Naive thymus-derived CD4-positive, alpha-beta T cell (primary cell): ENCODE measurements at regions of chr20 and their contacts with region 1.

Region 1: DNA sequence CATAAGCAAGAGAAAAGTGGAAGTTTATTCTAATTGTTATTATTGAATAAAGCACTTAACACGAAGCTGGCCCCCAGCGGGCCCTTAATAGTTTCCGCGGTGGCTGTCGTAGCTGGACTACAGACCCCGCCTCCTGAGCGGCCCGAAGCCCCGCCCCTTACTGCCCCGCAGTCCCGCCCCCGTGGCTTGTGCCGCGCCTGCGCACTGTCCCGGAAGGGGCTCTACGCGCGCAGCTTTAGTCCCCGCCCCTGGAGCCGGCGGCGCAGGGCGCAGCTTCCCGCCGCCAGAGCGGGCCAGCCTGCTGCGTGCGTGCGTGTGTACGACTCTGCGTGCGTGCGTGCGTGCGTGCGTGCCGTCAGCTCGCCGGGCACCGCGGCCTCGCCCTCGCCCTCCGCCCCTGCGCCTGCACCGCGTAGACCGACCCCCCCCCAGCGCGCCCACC is at the start of gene VAPB:
- DNase-seq: peak; percentile 94 to 99 (median 98)
- ATAC-seq: peak; percentile 98
- H3K4me3 ChIP-seq: peak within 1 kb of the TSS; percentile 77
- H3K4me3 Mint-ChIP-seq: peak within 1 kb of the TSS; percentile 82 to 100 (median 96)
- H3K27ac ChIP-seq: peak within 1 kb of the TSS; percentile 100
- H3K27ac Mint-ChIP-seq: peak within 1 kb of the TSS; percentile 84 to 99 (median 97)
- H3K4me1 ChIP-seq: peaks cover 13 to 28% of the 10 kb centered on the region in 2 donors
- H3K4me1 Mint-ChIP-seq: peaks cover 29 to 44% (median 42%) of the 10 kb centered on the region in 7 donors
- H3K27me3 ChIP-seq: no peaks in the 10 kb centered on the region
- H3K27me3 Mint-ChIP-seq: peaks cover 0 to 11% (median 0%) of the 10 kb centered on the region in 5 donors
- total RNA-seq, gene VAPB: 23.0 to 37.0 (median 27.6) TPM

Region 2: GRCh38 chr20:57628047-57628961 is 760.6 kb before region 1 on chr20:
- CTCF ChIA-PET with region 1: no interaction called
- POLR2A ChIA-PET with region 1: no interaction called
- intact Hi-C with region 1: loop called in 1 of 2 experiments (anchors 5 kb)
- DNase-seq: peak in 7 of 9 donors; percentile 62 to 81 (median 71)
- ATAC-seq: peak; percentile 88
- H3K4me3 ChIP-seq: peak overlapping the region; percentile 49
- H3K4me3 Mint-ChIP-seq: peak overlapping the region; percentile 85 to 97 (median 91)
- H3K27ac ChIP-seq: peak overlapping the region; percentile 83
- H3K27ac Mint-ChIP-seq: peak overlapping the region; percentile 92 to 100 (median 98)
- H3K4me1 ChIP-seq: peaks cover 41 to 51% of the 10 kb centered on the region in 2 donors
- H3K4me1 Mint-ChIP-seq: peaks cover 38 to 94% (median 80%) of the 10 kb centered on the region in 7 donors
- H3K27me3 ChIP-seq: no peaks in the 10 kb centered on the region
- H3K27me3 Mint-ChIP-seq: peaks cover 0 to 53% (median 0%) of the 10 kb centered on the region in 5 donors

Region 3: GRCh38 chr20:58407966-58408557 is 19.2 kb after region 1 on chr20:
- CTCF ChIA-PET with region 1: interaction called, 5 read pairs
- POLR2A ChIA-PET with region 1: interaction called, 14 read pairs
- intact Hi-C with region 1: loop called (anchors 1 kb)
- DNase-seq: peak in 7 of 9 donors; percentile 19 to 47 (median 37)
- ATAC-seq: peak; percentile 77
- H3K4me3 ChIP-seq: peak overlapping the region; percentile 25
- H3K4me3 Mint-ChIP-seq: peak overlapping the region; percentile 62 to 84 (median 73)
- H3K27ac ChIP-seq: peak overlapping the region; percentile 60
- H3K27ac Mint-ChIP-seq: peak overlapping the region in 8 of 9 donors; percentile 79 to 93 (median 89)
- H3K4me1 ChIP-seq: peaks cover 21 to 35% of the 10 kb centered on the region in 2 donors
- H3K4me1 Mint-ChIP-seq: peaks cover 13 to 44% (median 39%) of the 10 kb centered on the region in 7 donors
- H3K27me3 ChIP-seq: no peaks in the 10 kb centered on the region
- H3K27me3 Mint-ChIP-seq: no peaks in the 10 kb centered on the region

Region 4: GRCh38 chr20:58850693-58851174 is 461.8 kb after region 1 on chr20 and contains the start of gene GNAS-AS1:
- CTCF ChIA-PET with region 1: no interaction called
- POLR2A ChIA-PET with region 1: no interaction called
- intact Hi-C with region 1: loop called in 1 of 2 experiments (anchors 1 kb)
- DNase-seq: peak; percentile 57 to 81 (median 78)
- ATAC-seq: peak; percentile 87
- H3K4me3 ChIP-seq: peak within 1 kb of the TSS; percentile 61
- H3K4me3 Mint-ChIP-seq: peak within 1 kb of the TSS; percentile 83 to 95 (median 92)
- H3K27ac ChIP-seq: no peak within 1 kb of the TSS
- H3K27ac Mint-ChIP-seq: peak within 1 kb of the TSS in 4 of 9 donors; percentile 19 to 81 (median 54)
- H3K4me1 ChIP-seq: no peaks in the 10 kb centered on the region
- H3K4me1 Mint-ChIP-seq: peaks cover 11 to 36% (median 30%) of the 10 kb centered on the region in 7 donors
- H3K27me3 ChIP-seq: peaks cover 0 to 10% of the 10 kb centered on the region in 2 donors
- H3K27me3 Mint-ChIP-seq: peaks cover 21 to 67% (median 27%) of the 10 kb centered on the region in 5 donors
- total RNA-seq, gene GNAS-AS1: 0.13 to 2.0 (median 1.5) TPM

Region 5: GRCh38 chr20:58980700-58981627 is 592.1 kb after region 1 on chr20 and contains the start of gene NELFCD:
- CTCF ChIA-PET with region 1: no interaction called
- POLR2A ChIA-PET with region 1: no interaction called
- intact Hi-C with region 1: loop called (anchors 1 kb)
- DNase-seq: peak; percentile 78 to 96 (median 88)
- ATAC-seq: peak; percentile 97
- H3K4me3 ChIP-seq: peak within 1 kb of the TSS; percentile 91
- H3K4me3 Mint-ChIP-seq: peak within 1 kb of the TSS; percentile 86 to 97 (median 94)
- H3K27ac ChIP-seq: peak within 1 kb of the TSS; percentile 88
- H3K27ac Mint-ChIP-seq: peak within 1 kb of the TSS; percentile 77 to 98 (median 90)
- H3K4me1 ChIP-seq: peaks cover 24% of the 10 kb centered on the region in 2 donors
- H3K4me1 Mint-ChIP-seq: peaks cover 26 to 41% (median 32%) of the 10 kb centered on the region in 7 donors
- H3K27me3 ChIP-seq: no peaks in the 10 kb centered on the region
- H3K27me3 Mint-ChIP-seq: peaks cover 0 to 9% (median 0%) of the 10 kb centered on the region in 5 donors
- total RNA-seq, gene NELFCD: 84.5 to 96.1 (median 90.8) TPM

Region 6: GRCh38 chr20:59403261-59403961 is 1014.5 kb after region 1 on chr20:
- CTCF ChIA-PET with region 1: no interaction called
- POLR2A ChIA-PET with region 1: no interaction called
- intact Hi-C with region 1: loop called in 1 of 2 experiments (anchors 5 kb)
- DNase-seq: peak; percentile 65 to 91 (median 77)
- ATAC-seq: peak; percentile 93
- H3K4me3 ChIP-seq: peak overlapping the region; percentile 53
- H3K4me3 Mint-ChIP-seq: peak overlapping the region in 1 of 10 donors; percentile 59
- H3K27ac ChIP-seq: peak overlapping the region; percentile 41
- H3K27ac Mint-ChIP-seq: peak overlapping the region in 4 of 9 donors; percentile 49 to 94 (median 85)
- H3K4me1 ChIP-seq: peaks cover 12 to 35% of the 10 kb centered on the region in 2 donors
- H3K4me1 Mint-ChIP-seq: peaks cover 0 to 4% (median 2%) of the 10 kb centered on the region in 7 donors
- H3K27me3 ChIP-seq: peaks cover 0 to 7% of the 10 kb centered on the region in 2 donors
- H3K27me3 Mint-ChIP-seq: peaks cover 0 to 18% (median 3%) of the 10 kb centered on the region in 5 donors

Region 7: DNA sequence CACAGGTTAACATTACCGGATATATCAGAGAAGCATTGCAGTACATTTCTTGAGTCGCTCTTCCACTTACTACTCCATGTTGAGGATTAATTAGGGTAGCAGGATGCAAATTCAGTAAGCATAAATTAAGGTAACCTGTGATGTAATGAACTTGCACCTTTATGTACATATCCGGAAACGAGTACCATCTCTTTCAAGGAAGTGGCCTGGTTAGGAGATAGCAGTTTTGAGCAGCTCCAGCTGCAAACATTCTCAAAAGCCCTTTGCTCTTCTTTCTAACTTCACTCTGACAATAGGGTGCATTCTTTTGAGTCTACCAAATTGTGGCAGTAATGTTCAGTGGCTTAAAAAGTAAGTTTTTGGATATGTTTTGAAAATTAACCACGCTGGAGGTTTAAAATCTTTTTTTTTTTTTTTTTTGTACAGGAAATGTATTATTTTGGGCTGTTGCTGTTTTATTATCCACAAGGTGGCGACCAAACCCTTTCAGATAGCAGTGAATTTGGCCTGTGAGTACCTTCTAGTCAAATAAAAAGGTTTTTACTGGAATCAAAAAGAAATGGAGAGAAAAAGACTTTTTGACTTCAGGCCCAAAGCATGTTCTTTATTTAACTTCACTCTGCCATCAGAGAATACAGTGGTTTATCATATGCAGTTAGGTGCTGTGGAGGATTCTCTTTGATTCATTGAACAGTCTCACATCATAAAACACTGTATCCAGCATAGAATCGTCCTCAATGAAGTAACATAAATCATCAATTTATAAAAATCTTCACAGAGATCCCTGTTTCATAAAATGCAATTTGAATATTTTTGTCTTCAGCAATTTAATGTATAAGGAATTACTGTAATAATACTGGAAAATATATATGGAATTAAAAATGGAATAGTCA is 1560.2 kb after region 1 on chr20:
- CTCF ChIA-PET with region 1: no interaction called
- POLR2A ChIA-PET with region 1: no interaction called
- intact Hi-C with region 1: loop called in 1 of 2 experiments (anchors 5 kb)
- DNase-seq: peak in 7 of 9 donors; percentile 56 to 76 (median 72)
- ATAC-seq: peak; percentile 90
- H3K4me3 ChIP-seq: no peak overlapping the region
- H3K4me3 Mint-ChIP-seq: peak overlapping the region in 9 of 10 donors; percentile 34 to 80 (median 70)
- H3K27ac ChIP-seq: peak overlapping the region; percentile 55
- H3K27ac Mint-ChIP-seq: peak overlapping the region; percentile 82 to 95 (median 89)
- H3K4me1 ChIP-seq: peaks cover 0 to 10% of the 10 kb centered on the region in 2 donors
- H3K4me1 Mint-ChIP-seq: peaks cover 11 to 38% (median 22%) of the 10 kb centered on the region in 7 donors
- H3K27me3 ChIP-seq: no peaks in the 10 kb centered on the region
- H3K27me3 Mint-ChIP-seq: no peaks in the 10 kb centered on the region